IMR-90 (cell line): ENCODE measurements at regions of chr5 and their contacts with region 1.

Region 1: GRCh38 chr5:138185957-138186447 is 7.1 kb downstream of the KIF20A start:
- DNase-seq: no peak
- ATAC-seq: no peak
- H3K4me3 ChIP-seq: no peak overlapping the region
- H3K27ac ChIP-seq: no peak overlapping the region
- H3K4me1 ChIP-seq: no peaks in the 10 kb centered on the region
- H3K27me3 ChIP-seq: no peaks in the 10 kb centered on the region
- CTCF ChIP-seq: no peak
- POLR2A ChIP-seq: no peak
- RAD21 ChIP-seq: no peak

Region 2: DNA sequence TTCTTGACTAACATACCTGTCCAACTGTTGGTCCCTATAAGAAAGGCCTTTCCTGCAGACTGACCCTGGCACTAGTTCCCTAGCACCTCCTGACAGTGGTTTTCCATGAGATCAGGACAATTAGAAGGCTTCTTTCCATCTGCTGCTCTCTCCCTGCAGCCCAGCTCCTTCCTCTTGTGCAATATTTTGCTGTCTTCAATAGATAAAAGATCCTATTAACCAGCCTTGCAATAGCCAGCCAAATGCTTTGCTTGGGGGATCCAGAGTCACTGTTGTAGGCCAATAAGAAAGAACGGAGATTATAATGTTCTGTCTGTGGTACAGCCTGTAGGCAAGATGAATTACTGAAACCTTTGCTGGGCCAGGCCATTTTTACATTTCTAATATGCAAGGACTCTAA is 28.4 kb before region 1 on chr5:
- CTCF ChIA-PET with region 1: no interaction called
- POLR2A ChIA-PET with region 1: no interaction called
- dilution Hi-C with region 1: no loop called
- in situ Hi-C with region 1: no loop called
- intact Hi-C with region 1: no loop called
- DNase-seq: no peak
- ATAC-seq: no peak
- H3K4me3 ChIP-seq: no peak overlapping the region
- H3K27ac ChIP-seq: no peak overlapping the region
- H3K4me1 ChIP-seq: no peaks in the 10 kb centered on the region
- H3K27me3 ChIP-seq: no peaks in the 10 kb centered on the region
- CTCF ChIP-seq: no peak
- POLR2A ChIP-seq: no peak
- RAD21 ChIP-seq: no peak

Region 3: GRCh38 chr5:138170299-138170698 is 15.7 kb before region 1 on chr5:
- CTCF ChIA-PET with region 1: interaction called, 3 read pairs
- POLR2A ChIA-PET with region 1: no interaction called
- dilution Hi-C with region 1: no loop called
- in situ Hi-C with region 1: no loop called
- intact Hi-C with region 1: loop called (anchors 1 kb)
- DNase-seq: no peak
- ATAC-seq: no peak
- H3K4me3 ChIP-seq: no peak overlapping the region
- H3K27ac ChIP-seq: no peak overlapping the region
- H3K4me1 ChIP-seq: no peaks in the 10 kb centered on the region
- H3K27me3 ChIP-seq: no peaks in the 10 kb centered on the region
- CTCF ChIP-seq: no peak
- POLR2A ChIP-seq: no peak
- RAD21 ChIP-seq: no peak